Gastrocnemius medialis (tissue), 4 donors: ENCODE measurements at regions of chr5 and their contacts with region 1.

Region 1: DNA sequence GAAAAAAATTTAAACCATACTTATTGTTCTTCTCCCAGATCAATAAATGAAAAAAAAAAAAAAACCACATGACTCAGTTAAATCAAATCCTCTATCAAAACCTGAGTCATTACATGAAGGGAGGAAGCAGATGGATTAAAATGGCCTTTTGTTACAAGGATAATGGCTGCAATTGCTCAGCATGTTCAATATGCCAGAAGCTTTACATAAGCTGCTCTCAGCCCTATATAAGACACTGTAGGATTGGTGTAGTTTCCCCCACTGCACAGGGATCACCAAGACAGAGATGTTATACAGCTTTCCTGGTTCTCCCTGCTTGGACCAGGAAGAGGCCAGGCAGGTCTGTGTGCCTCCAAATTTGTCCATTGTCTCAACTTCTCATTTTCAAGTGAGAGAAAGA is 101.6 kb upstream of the MAP1B start:
- DNase-seq: no peak
- ATAC-seq: no peak
- H3K4me3 ChIP-seq: no peak overlapping the region
- H3K27ac ChIP-seq: no peak overlapping the region
- H3K4me1 ChIP-seq: no peaks in the 10 kb centered on the region
- H3K27me3 ChIP-seq: no peaks in the 10 kb centered on the region
- CTCF ChIP-seq: no peak
- POLR2A ChIP-seq: no peak

Region 2: DNA sequence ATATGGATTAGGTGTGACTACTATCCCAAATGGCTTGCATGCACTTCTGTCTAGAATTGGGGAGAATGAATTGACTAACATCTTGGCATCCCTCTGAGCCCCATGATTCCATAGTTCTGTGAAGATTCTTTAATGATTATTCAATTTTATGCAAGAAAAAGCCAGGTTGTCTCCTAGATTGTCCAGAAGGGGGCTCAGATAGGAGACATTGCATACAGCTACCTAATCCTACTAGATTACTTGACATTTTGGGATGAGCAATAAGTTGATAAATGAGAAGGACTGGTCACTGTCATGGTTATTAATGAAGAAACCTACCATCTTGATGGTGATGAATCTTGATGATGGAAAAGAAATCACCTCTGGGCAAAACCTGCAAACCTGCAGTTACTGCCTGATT is 169.6 kb before region 1 on chr5:
- in situ Hi-C with region 1: no loop called
- intact Hi-C with region 1: no loop called
- DNase-seq: no peak
- ATAC-seq: no peak
- H3K4me3 ChIP-seq: no peak overlapping the region
- H3K27ac ChIP-seq: no peak overlapping the region
- H3K4me1 ChIP-seq: peaks cover 0 to under 1% of the 10 kb centered on the region in 2 donors
- H3K27me3 ChIP-seq: no peaks in the 10 kb centered on the region
- CTCF ChIP-seq: no peak
- POLR2A ChIP-seq: no peak

Region 3: DNA sequence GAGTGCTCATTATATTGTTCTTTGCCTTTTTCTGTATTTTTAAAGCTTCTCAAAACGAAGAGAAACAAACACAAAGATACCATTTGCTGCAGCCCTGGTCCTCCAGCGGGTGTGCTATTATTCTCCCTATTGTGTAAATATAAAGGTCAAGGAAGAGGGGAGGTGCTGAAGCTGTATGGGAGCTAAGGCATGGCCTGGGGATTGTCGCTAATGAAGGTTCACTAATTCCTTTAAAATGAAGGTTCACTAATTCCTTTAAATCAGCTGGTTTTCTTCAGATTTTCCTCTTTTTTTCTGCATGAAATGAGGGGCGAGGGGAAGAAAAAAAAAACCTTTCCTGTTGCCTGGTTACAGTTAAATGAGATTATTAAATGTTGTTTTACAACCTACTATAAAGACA is 27.1 kb after region 1 on chr5:
- in situ Hi-C with region 1: no loop called
- intact Hi-C with region 1: loop called (anchors 1 kb)
- DNase-seq: no peak
- ATAC-seq: no peak
- H3K4me3 ChIP-seq: no peak overlapping the region
- H3K27ac ChIP-seq: no peak overlapping the region
- H3K4me1 ChIP-seq: no peaks in the 10 kb centered on the region
- H3K27me3 ChIP-seq: no peaks in the 10 kb centered on the region
- CTCF ChIP-seq: no peak
- POLR2A ChIP-seq: no peak